ENCODE measurements at regions of chr20 and their contacts with region 1.

Region 1: GRCh38 chr20:59948828-59949720 is 8.9 kb downstream of the FAM217B start:
- DNase-seq: peak; percentile 25 to 57
- H3K4me3 ChIP-seq: no peak overlapping the region
- H3K27ac ChIP-seq: peak overlapping the region; percentile 36; the same call in 1 of the 2 replicates
- H3K4me1 ChIP-seq: peaks cover 28% of the 10 kb centered on the region
- H3K27me3 ChIP-seq: no peaks in the 10 kb centered on the region
- CTCF ChIP-seq: peak; percentile 89

Region 2: GRCh38 chr20:59571551-59572314 is 377.3 kb before region 1 on chr20:
- CTCF ChIA-PET with region 1: no interaction called
- POLR2A ChIA-PET with region 1: no interaction called
- intact Hi-C with region 1: no loop called
- DNase-seq: peak in 1 of 2 experiments; percentile 29
- H3K4me3 ChIP-seq: no peak overlapping the region
- H3K27ac ChIP-seq: no peak overlapping the region
- H3K4me1 ChIP-seq: no peaks in the 10 kb centered on the region
- H3K27me3 ChIP-seq: peaks cover 73% of the 10 kb centered on the region
- CTCF ChIP-seq: peak; percentile 97

Region 3: DNA sequence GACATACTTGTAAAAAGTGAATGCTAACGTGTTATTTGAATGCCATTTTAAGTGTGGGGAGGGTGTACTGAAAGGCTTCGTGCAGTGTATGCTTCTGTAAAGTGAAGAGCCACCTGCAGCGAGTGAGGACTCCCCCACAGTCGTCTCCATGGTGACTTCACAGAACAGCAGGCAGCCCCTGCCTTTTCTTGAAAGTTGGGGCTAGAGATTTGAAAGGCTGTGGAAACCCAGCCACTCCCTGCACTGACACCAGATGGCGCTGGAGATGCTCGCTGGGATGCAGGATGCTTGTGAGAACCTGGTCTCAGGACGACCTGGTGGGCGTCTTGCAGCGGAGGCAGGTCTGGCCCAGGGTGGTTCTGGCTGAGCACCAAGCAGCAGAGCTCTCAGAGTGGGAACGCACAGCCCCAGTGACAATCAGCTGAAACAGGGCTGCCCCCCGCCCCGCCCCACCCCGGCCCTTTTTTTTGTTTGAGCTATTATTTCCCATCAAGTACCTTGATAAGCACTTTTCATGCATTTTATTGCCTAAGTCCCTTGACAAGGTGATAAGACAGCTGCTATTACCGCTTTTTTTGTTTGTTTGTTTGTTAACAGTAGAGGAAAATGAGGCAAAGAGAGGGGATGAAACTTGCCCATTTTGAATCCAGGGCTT is 166.0 kb before region 1 on chr20:
- CTCF ChIA-PET with region 1: no interaction called
- POLR2A ChIA-PET with region 1: no interaction called
- intact Hi-C with region 1: loop called (anchors 5 kb)
- DNase-seq: peak; percentile 45 to 57
- H3K4me3 ChIP-seq: no peak overlapping the region
- H3K27ac ChIP-seq: no peak overlapping the region
- H3K4me1 ChIP-seq: no peaks in the 10 kb centered on the region
- H3K27me3 ChIP-seq: 0 out of 2 replicates have a peak, but pooled peaks cover 3% of the 10 kb centered on the region
- CTCF ChIP-seq: peak; percentile 94

Region 4: GRCh38 chr20:60050158-60050947 is 101.3 kb after region 1 on chr20:
- CTCF ChIA-PET with region 1: interaction called, 6 read pairs
- POLR2A ChIA-PET with region 1: interaction called, 6 read pairs
- intact Hi-C with region 1: loop called (anchors 1 kb)
- DNase-seq: peak; percentile 62 to 67
- H3K4me3 ChIP-seq: no peak overlapping the region
- H3K27ac ChIP-seq: no peak overlapping the region
- H3K4me1 ChIP-seq: no peaks in the 10 kb centered on the region
- H3K27me3 ChIP-seq: no peaks in the 10 kb centered on the region
- CTCF ChIP-seq: peak; percentile 81

Region 5: DNA sequence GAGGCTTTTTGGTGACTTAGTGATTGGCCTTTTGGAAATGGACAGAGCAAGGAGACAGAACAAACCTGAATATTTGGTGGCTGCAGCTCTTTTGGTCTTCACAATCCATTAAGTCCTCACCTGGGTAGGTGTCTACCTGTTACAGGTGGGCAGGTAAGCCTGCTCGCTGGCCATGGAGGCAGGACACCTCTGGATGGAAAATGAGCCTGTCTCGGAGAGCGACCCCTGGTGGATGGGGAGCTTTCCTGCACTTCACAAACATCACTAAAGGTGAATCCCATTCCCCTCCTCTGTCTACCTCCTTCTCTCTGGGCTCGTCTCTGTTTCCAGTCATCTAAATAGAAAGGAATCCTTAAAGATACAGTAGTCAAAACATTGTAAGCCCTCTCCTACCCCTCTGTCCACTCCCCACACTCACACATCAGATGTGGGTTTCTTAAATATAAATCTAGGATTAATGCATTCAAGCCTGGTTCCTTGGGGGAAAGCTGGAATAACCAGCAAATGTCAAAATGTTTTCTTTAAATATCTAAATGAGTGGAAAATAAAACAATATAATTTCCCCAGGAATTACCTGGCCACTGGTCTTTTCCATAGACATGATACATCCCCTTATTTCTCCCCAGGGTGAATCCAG is 314.0 kb after region 1 on chr20:
- CTCF ChIA-PET with region 1: no interaction called
- POLR2A ChIA-PET with region 1: no interaction called
- intact Hi-C with region 1: loop called (anchors 1 kb)
- DNase-seq: peak in 1 of 2 experiments; percentile 16
- H3K4me3 ChIP-seq: no peak overlapping the region
- H3K27ac ChIP-seq: no peak overlapping the region
- H3K4me1 ChIP-seq: no peaks in the 10 kb centered on the region
- H3K27me3 ChIP-seq: peaks cover 89% of the 10 kb centered on the region
- CTCF ChIP-seq: peak; percentile 79

Measured in PC-9 (cell line).